Activated naive CD4-positive, alpha-beta T cell treated with anti-CD3 and anti-CD28 coated beads for 36 hours (primary cell): ENCODE measurements at regions of chr12 and their contacts with region 1.

Region 1: GRCh38 chr12:57111031-57111734 is at the start of gene STAT6:
- DNase-seq: peak; percentile 92
- H3K4me3 Mint-ChIP-seq: peak within 1 kb of the TSS; percentile 92
- H3K27ac Mint-ChIP-seq: peak within 1 kb of the TSS; percentile 94
- H3K4me1 Mint-ChIP-seq: peaks cover 45% of the 10 kb centered on the region
- H3K27me3 Mint-ChIP-seq: no peaks in the 10 kb centered on the region
- total RNA-seq, gene STAT6: 188 to 193 TPM

Region 2: DNA sequence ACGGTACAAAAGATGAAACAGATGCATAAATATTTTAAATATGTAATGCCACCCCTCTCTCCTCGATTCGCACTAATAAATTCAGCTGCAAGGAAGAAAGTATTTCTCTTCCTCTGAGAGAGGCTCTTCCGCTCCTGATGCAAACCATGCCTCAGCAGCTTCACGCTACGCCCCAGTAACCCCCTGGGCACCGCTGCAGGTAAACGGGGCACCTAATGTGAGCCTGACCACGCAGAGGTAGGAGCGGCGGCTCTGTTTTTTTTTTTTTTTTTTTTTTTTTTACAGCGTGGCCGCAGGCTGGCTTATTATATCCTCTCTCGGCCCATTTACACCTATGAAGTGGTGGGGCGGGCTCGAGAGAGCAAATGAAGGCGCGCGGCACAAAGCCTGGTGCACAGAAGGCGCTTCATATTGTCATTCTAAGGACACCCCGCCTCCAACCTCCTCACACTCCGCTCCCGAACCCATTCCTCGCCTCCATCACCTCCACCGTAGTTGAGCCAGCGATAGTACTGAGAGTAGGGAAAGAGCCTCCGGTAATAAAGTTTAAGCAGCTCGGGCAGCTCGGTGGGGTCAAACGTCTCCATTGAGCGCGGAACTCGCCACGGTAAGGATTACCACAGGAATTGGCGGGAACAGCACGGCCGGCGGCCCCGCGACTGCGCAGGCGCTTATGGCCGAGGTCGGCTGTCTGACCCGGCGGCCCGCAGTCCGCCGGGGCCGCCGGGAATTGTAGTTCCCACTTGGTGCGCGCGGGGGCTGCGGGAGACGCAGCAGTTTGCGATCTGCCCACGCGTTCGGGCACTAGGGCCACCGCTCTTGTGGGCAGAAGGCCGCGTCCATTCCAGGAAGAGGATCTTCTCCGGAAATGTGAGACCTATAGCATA is 359.2 kb before region 1 on chr12 and contains the start of gene PRIM1:
- CTCF ChIA-PET with region 1: interaction called, 9 read pairs
- intact Hi-C with region 1: loop called (anchors 1 kb)
- DNase-seq: peak; percentile 90
- H3K4me3 Mint-ChIP-seq: peak within 1 kb of the TSS; percentile 98
- H3K27ac Mint-ChIP-seq: peak within 1 kb of the TSS; percentile 99
- H3K4me1 Mint-ChIP-seq: peaks cover 40% of the 10 kb centered on the region
- H3K27me3 Mint-ChIP-seq: no peaks in the 10 kb centered on the region
- total RNA-seq, gene PRIM1: 74.9 to 75.0 TPM

Region 3: DNA sequence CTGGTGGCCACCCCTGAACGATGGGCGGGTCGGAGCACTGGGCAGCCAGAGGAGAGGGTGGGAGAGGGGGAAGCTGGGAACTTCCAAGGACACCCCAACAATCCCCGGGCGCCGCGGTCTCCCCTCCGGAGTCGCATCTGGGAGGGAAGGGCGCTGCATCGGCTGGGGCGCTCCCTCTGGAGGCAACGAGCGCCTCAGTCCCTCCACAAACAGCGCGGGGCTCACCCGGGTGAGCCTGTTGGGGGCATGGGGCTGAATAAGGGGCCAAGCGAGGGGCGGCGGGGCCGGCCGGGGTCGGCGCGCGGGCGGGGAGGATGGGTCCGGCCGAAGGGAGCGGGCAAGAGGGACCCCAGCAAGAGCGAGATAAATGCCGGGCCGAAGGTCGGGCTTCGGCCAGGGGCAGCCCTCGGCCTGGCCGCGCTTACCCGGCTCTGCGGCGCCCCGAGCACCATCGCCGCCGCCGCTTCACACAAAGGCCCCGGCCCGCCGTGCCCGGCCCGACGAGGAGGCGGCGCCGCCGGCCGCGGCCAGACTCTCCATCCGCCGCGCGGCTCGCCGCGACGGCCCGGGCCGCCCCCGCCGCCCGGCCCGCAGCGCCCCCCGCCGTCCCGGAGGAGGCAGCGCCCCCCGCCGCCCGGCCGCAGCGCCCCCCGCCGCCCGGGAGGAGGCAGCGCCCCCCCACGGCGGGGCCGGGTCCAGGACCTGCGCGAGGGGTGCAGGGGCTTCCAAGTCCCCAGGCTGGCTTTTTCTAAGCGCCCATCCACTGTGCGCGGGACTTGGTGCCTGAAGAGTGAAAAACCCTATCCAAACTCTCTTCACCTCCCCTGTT is 105.0 kb before region 1 on chr12 and contains the start of gene ZBTB39:
- CTCF ChIA-PET with region 1: interaction called, 116 read pairs
- intact Hi-C with region 1: loop called (anchors 1 kb)
- DNase-seq: peak; percentile 59
- H3K4me3 Mint-ChIP-seq: peak within 1 kb of the TSS; percentile 92
- H3K27ac Mint-ChIP-seq: peak within 1 kb of the TSS; percentile 90
- H3K4me1 Mint-ChIP-seq: peaks cover 72% of the 10 kb centered on the region
- H3K27me3 Mint-ChIP-seq: no peaks in the 10 kb centered on the region
- total RNA-seq, gene ZBTB39: 5.1 to 5.5 TPM

Region 4: GRCh38 chr12:57063991-57064685 is 47.0 kb before region 1 on chr12:
- CTCF ChIA-PET with region 1: interaction called, 109 read pairs
- intact Hi-C with region 1: loop called (anchors 1 kb)
- DNase-seq: peak; percentile 81
- H3K4me3 Mint-ChIP-seq: peak overlapping the region; percentile 68
- H3K27ac Mint-ChIP-seq: peak overlapping the region; percentile 96
- H3K4me1 Mint-ChIP-seq: peaks cover 66% of the 10 kb centered on the region
- H3K27me3 Mint-ChIP-seq: no peaks in the 10 kb centered on the region

Region 5: GRCh38 chr12:57088459-57089248 is 22.5 kb before region 1 on chr12 and contains the start of gene NAB2:
- CTCF ChIA-PET with region 1: interaction called, 63 read pairs
- intact Hi-C with region 1: loop called (anchors 1 kb)
- DNase-seq: peak; percentile 92
- H3K4me3 Mint-ChIP-seq: peak within 1 kb of the TSS; percentile 91
- H3K27ac Mint-ChIP-seq: peak within 1 kb of the TSS; percentile 99
- H3K4me1 Mint-ChIP-seq: peaks cover 61% of the 10 kb centered on the region
- H3K27me3 Mint-ChIP-seq: no peaks in the 10 kb centered on the region
- total RNA-seq, gene NAB2: 18.4 to 19.1 TPM

Region 6: GRCh38 chr12:57238854-57239554 is 127.8 kb after region 1 on chr12:
- CTCF ChIA-PET with region 1: interaction called, 7 read pairs
- intact Hi-C with region 1: loop called (anchors 2 kb)
- DNase-seq: peak; percentile 91
- H3K4me3 Mint-ChIP-seq: peak overlapping the region; percentile 93
- H3K27ac Mint-ChIP-seq: peak overlapping the region; percentile 66
- H3K4me1 Mint-ChIP-seq: peaks cover 66% of the 10 kb centered on the region
- H3K27me3 Mint-ChIP-seq: peaks cover 50% of the 10 kb centered on the region

Region 7: DNA sequence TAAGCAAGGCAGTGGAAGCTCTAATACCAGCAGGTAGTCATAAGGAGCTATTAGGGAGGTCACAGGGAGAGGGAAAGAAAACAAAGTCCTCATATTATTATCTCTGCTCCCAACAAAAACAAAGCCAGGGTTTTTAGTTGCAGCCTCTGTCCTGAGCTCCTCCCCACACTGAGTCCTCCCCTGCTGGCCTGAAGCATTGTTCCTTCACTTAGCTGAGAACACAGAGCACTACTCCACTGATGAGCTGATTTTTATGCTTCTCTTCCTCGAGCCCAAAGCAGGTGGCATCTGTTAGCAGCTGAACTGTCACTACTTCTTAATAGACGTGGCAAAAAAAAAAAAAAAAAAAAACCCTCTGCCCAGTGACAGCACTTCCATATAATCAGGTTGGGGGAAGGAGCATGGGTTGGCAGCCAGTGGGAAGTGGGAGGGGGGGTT is 150.3 kb after region 1 on chr12:
- CTCF ChIA-PET with region 1: no interaction called
- intact Hi-C with region 1: no loop called
- DNase-seq: no peak
- H3K4me3 Mint-ChIP-seq: no peak overlapping the region
- H3K27ac Mint-ChIP-seq: no peak overlapping the region
- H3K4me1 Mint-ChIP-seq: no peaks in the 10 kb centered on the region
- H3K27me3 Mint-ChIP-seq: no peaks in the 10 kb centered on the region

Region 8: GRCh38 chr12:57389033-57389432 is 277.9 kb after region 1 on chr12:
- CTCF ChIA-PET with region 1: no interaction called
- intact Hi-C with region 1: no loop called
- DNase-seq: no peak
- H3K4me3 Mint-ChIP-seq: no peak overlapping the region
- H3K27ac Mint-ChIP-seq: no peak overlapping the region
- H3K4me1 Mint-ChIP-seq: peaks cover 10% of the 10 kb centered on the region
- H3K27me3 Mint-ChIP-seq: no peaks in the 10 kb centered on the region